Calu3 (cell line): ENCODE measurements at regions of chr10 and their contacts with region 1.

Region 1: DNA sequence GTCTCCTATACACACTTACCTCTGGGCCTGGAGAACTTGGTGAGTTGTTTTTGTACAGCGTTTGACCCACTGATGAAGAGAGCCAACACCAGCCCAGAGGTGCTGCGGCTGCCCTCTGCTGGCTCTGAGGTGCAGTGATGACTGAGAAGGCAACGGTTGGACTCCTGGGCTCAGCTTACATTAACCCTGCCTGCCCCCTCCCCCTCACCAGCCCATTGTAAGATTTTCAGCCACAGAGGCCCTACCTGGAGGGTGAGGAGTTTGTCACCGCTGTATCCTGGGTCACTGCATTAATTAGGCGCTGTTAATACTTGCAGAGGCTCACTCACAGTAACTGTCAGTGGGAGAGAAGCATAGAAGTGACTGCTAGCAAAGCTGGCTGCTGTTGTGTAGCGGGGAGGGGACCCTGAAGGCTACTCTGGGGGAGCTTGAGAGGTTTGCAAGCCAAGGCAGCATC is 19.0 kb upstream of the ANKRD2 start:
- DNase-seq: peak; percentile 41
- H3K4me3 Mint-ChIP-seq: no peak overlapping the region
- H3K27ac Mint-ChIP-seq: no peak overlapping the region
- H3K4me1 Mint-ChIP-seq: no peaks in the 10 kb centered on the region
- H3K27me3 Mint-ChIP-seq: no peaks in the 10 kb centered on the region
- CTCF ChIP-seq: peak; percentile 34

Region 2: DNA sequence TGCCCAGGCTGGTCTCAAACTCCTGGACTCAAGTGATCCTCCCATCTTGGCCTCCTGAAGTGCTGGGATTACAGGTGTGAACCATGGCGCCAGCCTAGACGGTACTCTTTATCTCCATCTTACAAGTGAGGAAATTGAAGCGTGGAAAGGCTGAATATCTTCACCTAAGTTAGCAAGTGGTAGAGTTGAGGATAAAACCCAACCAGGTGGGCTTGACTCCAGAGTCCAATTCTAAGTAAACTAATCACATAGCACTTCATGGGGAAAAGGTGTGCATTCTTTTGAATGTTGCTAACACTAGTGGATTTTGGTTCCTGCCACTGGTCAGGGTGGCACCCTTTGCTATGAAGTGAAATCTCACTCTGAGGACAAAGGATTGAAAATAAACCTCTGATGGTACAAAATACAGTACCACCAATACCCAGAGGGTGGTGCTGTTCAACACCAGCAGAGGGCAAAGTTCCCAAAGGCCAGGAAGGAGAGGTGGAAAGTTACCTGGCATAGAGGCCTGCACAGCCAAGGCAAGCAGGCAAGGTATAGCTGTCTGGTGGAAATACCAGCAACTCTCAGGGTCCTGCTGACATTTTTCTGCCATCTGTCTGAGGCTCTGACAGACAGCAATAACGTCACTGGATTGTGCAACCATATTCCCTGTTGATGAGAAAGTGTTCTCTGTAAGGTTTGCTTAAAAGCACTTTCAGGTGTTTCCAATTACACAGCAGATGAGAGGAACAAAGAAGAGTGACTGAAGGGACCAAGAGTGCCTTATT is 90.1 kb before region 1 on chr10:
- CTCF ChIA-PET with region 1: no interaction called
- intact Hi-C with region 1: loop called (anchors 5 kb)
- DNase-seq: peak; percentile 59
- H3K4me3 Mint-ChIP-seq: no peak overlapping the region
- H3K27ac Mint-ChIP-seq: no peak overlapping the region
- H3K4me1 Mint-ChIP-seq: no peaks in the 10 kb centered on the region
- H3K27me3 Mint-ChIP-seq: no peaks in the 10 kb centered on the region
- CTCF ChIP-seq: peak; percentile 79

Region 3: GRCh38 chr10:98023024-98023423 is 469.4 kb after region 1 on chr10:
- CTCF ChIA-PET with region 1: no interaction called
- intact Hi-C with region 1: no loop called
- DNase-seq: no peak
- H3K4me3 Mint-ChIP-seq: no peak overlapping the region
- H3K27ac Mint-ChIP-seq: no peak overlapping the region
- H3K4me1 Mint-ChIP-seq: no peaks in the 10 kb centered on the region
- H3K27me3 Mint-ChIP-seq: peaks cover 84% of the 10 kb centered on the region
- CTCF ChIP-seq: no peak